ENCODE measurements at regions of chr7 and their contacts with region 1.

Region 1: GRCh38 chr7:12067141-12067831 is 143.8 kb upstream of the TMEM106B start:
- DNase-seq: peak; percentile 18
- H3K4me3 Mint-ChIP-seq: no peak overlapping the region
- H3K27ac Mint-ChIP-seq: no peak overlapping the region
- H3K4me1 Mint-ChIP-seq: no peaks in the 10 kb centered on the region
- H3K27me3 Mint-ChIP-seq: peaks cover 3% of the 10 kb centered on the region

Region 2: GRCh38 chr7:12162415-12163113 is 95.3 kb after region 1 on chr7:
- intact Hi-C with region 1: loop called (anchors 5 kb)
- DNase-seq: no peak
- H3K4me3 Mint-ChIP-seq: no peak overlapping the region
- H3K27ac Mint-ChIP-seq: no peak overlapping the region
- H3K4me1 Mint-ChIP-seq: no peaks in the 10 kb centered on the region
- H3K27me3 Mint-ChIP-seq: peaks cover 7% of the 10 kb centered on the region

Region 3: GRCh38 chr7:12211054-12211710 is 143.9 kb after region 1 on chr7 and contains the start of gene TMEM106B:
- intact Hi-C with region 1: loop called (anchors 2 kb)
- DNase-seq: peak; percentile 95
- H3K4me3 Mint-ChIP-seq: peak within 1 kb of the TSS; percentile 97
- H3K27ac Mint-ChIP-seq: peak within 1 kb of the TSS; percentile 90
- H3K4me1 Mint-ChIP-seq: peaks cover 31% of the 10 kb centered on the region
- H3K27me3 Mint-ChIP-seq: peaks cover 13% of the 10 kb centered on the region
- total RNA-seq, gene TMEM106B: 23.9 and 24.1 TPM in 2 replicates

Region 4: DNA sequence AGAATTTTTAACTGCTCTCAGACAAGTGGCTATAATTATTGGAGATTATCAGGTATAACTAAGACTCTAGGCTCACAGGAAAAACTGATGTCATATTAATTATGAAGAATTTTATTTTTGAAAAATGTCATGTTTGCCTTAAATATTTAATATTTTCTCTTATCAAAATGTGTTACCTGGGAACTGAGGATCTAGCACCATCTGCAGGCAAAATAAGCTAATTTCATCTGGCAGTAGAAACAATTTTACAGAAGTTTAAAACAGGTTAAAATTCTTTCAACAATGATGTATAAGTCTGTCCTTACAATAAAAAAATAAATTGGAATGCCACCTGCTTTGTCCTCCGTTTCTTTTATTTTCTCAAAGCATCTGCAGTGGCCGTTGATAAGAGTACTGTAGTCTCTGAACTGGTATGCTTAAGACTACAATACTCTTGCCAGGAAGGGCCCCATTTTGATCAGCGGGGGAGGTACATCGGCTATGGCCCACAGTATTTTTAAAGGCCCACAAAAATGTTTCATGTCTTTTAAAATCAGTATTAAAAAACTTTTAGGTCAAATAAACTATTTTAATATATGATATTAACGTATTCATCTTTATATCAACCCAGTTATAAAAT is 255.1 kb after region 1 on chr7:
- intact Hi-C with region 1: loop called (anchors 1 kb)
- DNase-seq: no peak
- H3K4me3 Mint-ChIP-seq: no peak overlapping the region
- H3K27ac Mint-ChIP-seq: no peak overlapping the region
- H3K4me1 Mint-ChIP-seq: no peaks in the 10 kb centered on the region
- H3K27me3 Mint-ChIP-seq: no peaks in the 10 kb centered on the region

Region 5: GRCh38 chr7:12458520-12459131 is 391.3 kb after region 1 on chr7:
- intact Hi-C with region 1: loop called (anchors 5 kb)
- DNase-seq: no peak
- H3K4me3 Mint-ChIP-seq: no peak overlapping the region
- H3K27ac Mint-ChIP-seq: no peak overlapping the region
- H3K4me1 Mint-ChIP-seq: no peaks in the 10 kb centered on the region
- H3K27me3 Mint-ChIP-seq: peaks cover 3% of the 10 kb centered on the region

Region 6: GRCh38 chr7:12490117-12490688 is 422.9 kb after region 1 on chr7:
- intact Hi-C with region 1: loop called (anchors 10 kb)
- DNase-seq: no peak
- H3K4me3 Mint-ChIP-seq: no peak overlapping the region
- H3K27ac Mint-ChIP-seq: no peak overlapping the region
- H3K4me1 Mint-ChIP-seq: no peaks in the 10 kb centered on the region
- H3K27me3 Mint-ChIP-seq: peaks cover 5% of the 10 kb centered on the region

Measured in activated T-helper 2 cell treated with anti-CD3 and anti-CD28 coated beads, Interferon-gamma antibody, Interleukin-2, Interleukin-4, amounts not matched to agents 10 μg/mL and 5 μg/mL and 100 μg/mL, durations not matched to agents 14 hours and 24 hours and 36 hours (primary cell).